ENCODE measurements at regions of chr5 and their contacts with region 1.

Region 1: GRCh38 chr5:126248611-126249010 is 174.6 kb upstream of the GRAMD2B start:
- DNase-seq: no peak
- H3K4me3 ChIP-seq: no peak overlapping the region
- H3K27ac ChIP-seq: no peak overlapping the region
- H3K4me1 ChIP-seq: no peaks in the 10 kb centered on the region
- H3K27me3 ChIP-seq: no peaks in the 10 kb centered on the region
- CTCF ChIP-seq: no peak
- POLR2A ChIP-seq: no peak

Region 2: DNA sequence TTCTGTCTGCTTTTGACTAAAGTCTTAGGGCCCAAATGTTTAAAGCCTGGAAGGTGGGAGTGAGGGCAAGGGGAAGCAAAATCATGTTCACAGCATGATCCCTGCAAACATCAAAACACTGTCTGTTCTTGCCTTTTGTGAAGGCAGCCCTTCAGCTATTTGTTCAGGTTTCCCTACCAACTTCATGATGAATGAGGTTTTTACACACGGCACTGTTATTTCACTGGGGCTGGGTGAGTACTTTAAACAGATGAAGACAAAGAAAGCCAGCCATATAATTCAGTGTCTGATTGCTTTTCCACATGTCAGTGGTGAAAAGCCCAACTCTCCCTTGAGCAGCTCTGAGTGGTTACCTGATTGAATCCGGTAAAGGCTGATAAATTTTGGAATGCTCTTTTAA is 50.1 kb before region 1 on chr5:
- intact Hi-C with region 1: loop called (anchors 2 kb)
- DNase-seq: no peak
- H3K4me3 ChIP-seq: no peak overlapping the region
- H3K27ac ChIP-seq: no peak overlapping the region
- H3K4me1 ChIP-seq: no peaks in the 10 kb centered on the region
- H3K27me3 ChIP-seq: no peaks in the 10 kb centered on the region
- CTCF ChIP-seq: no peak
- POLR2A ChIP-seq: no peak

Measured in breast epithelium (tissue), 4 donors.